ENCODE measurements at regions of chr3 and their contacts with region 1.

Region 1: GRCh38 chr3:50627407-50628051 is 10.6 kb downstream of the MAPKAPK3 start:
- DNase-seq: no peak
- H3K4me3 Mint-ChIP-seq: no peak overlapping the region
- H3K27ac Mint-ChIP-seq: peak overlapping the region; percentile 9
- H3K4me1 Mint-ChIP-seq: peaks cover 97% of the 10 kb centered on the region
- H3K27me3 Mint-ChIP-seq: no peaks in the 10 kb centered on the region

Region 2: GRCh38 chr3:50639055-50639494 is 11.5 kb after region 1 on chr3:
- CTCF ChIA-PET with region 1: interaction called, 11 read pairs
- POLR2A ChIA-PET with region 1: interaction called, 3 read pairs
- DNase-seq: no peak
- H3K4me3 Mint-ChIP-seq: no peak overlapping the region
- H3K27ac Mint-ChIP-seq: no peak overlapping the region
- H3K4me1 Mint-ChIP-seq: peaks cover 39% of the 10 kb centered on the region
- H3K27me3 Mint-ChIP-seq: no peaks in the 10 kb centered on the region